A673 (cell line): ENCODE measurements at regions of chr2 and their contacts with region 1.

Region 1: DNA sequence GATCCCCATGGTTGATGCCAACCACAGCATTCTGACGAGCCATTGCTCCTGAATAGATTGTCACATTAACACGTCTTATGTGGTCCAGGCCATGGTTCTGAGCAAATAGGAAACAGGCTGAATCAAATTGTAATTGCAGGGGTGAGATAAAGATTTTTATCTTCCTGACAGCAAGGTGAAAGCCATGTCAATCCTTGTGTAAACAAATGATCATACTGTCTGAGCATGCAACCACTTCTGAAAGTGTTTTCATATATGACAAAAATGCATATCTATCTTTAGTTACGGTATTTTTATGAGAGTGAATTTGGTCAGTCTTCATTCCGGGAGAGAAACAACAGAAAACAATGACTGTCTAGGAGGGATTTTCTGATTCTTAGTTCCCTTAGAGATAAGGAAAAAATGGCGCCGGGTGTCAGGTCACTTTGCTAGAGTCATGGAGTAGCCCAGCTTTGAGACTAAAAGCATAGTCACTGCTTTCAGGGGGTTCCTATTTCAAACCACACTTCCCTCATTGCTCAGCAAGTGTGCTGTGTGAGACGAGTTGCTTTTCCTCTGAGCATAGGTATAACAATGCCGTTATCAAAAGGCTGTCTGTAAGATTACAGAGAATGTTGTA is 958.9 kb downstream of the DCDC2C start:
- DNase-seq: no peak
- H3K4me3 ChIP-seq: no peak overlapping the region
- H3K27ac ChIP-seq: no peak overlapping the region
- H3K4me1 ChIP-seq: no peaks in the 10 kb centered on the region
- H3K27me3 ChIP-seq: no peaks in the 10 kb centered on the region
- CTCF ChIP-seq: no peak

Region 2: GRCh38 chr2:4604767-4605166 is 57.5 kb before region 1 on chr2:
- CTCF ChIA-PET with region 1: no interaction called
- POLR2A ChIA-PET with region 1: interaction called, 12 read pairs
- intact Hi-C with region 1: no loop called
- DNase-seq: no peak
- H3K4me3 ChIP-seq: no peak overlapping the region
- H3K27ac ChIP-seq: no peak overlapping the region
- H3K4me1 ChIP-seq: peaks cover 14% of the 10 kb centered on the region
- H3K27me3 ChIP-seq: no peaks in the 10 kb centered on the region
- CTCF ChIP-seq: no peak

Region 3: DNA sequence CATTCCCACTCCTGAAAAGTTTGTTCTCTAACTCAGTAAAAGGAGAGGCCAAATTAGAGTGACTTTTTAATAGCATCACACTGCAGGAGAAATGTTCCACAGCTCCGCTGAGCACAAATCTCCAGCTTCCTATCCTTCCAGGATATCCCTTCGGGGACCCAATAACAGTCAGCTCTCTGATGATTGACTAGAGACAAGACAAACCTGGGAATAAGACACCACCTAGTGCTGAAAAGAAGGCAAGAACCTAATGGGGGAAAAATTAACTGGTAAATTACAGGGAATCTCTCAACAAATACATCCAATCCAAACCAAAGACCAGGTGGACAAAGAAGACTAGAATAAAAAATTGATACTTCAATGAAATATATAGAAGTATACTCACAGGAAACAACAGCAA is 52.8 kb after region 1 on chr2:
- CTCF ChIA-PET with region 1: no interaction called
- POLR2A ChIA-PET with region 1: no interaction called
- intact Hi-C with region 1: no loop called
- DNase-seq: peak; percentile 72
- H3K4me3 ChIP-seq: no peak overlapping the region
- H3K27ac ChIP-seq: peak overlapping the region; percentile 22
- H3K4me1 ChIP-seq: no peaks in the 10 kb centered on the region
- H3K27me3 ChIP-seq: no peaks in the 10 kb centered on the region
- CTCF ChIP-seq: peak; percentile 57

Region 4: DNA sequence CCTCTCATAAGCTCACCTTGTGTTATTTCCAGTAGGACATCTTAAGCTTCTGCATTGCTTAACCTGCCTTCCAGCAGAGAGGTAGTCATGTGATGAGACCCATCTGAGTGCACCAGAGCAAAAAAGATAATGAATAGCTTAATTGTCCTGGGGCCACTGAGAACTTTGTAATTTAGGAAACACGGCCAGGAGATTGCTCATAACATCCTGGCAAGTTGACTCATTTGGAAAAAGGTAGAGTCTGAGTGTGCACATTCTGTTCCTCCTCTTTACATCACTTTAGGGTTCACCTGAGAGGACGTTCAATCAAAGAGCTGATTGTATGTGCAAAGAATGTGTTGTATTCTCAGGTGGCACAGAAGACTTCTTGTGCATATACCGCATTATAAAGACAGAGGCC is 199.8 kb after region 1 on chr2:
- CTCF ChIA-PET with region 1: no interaction called
- POLR2A ChIA-PET with region 1: no interaction called
- intact Hi-C with region 1: no loop called
- DNase-seq: no peak
- H3K4me3 ChIP-seq: no peak overlapping the region
- H3K27ac ChIP-seq: no peak overlapping the region
- H3K4me1 ChIP-seq: no peaks in the 10 kb centered on the region
- H3K27me3 ChIP-seq: no peaks in the 10 kb centered on the region
- CTCF ChIP-seq: no peak